T47D (cell line): ENCODE measurements at regions of chr1 and their contacts with region 1.

Region 1: DNA sequence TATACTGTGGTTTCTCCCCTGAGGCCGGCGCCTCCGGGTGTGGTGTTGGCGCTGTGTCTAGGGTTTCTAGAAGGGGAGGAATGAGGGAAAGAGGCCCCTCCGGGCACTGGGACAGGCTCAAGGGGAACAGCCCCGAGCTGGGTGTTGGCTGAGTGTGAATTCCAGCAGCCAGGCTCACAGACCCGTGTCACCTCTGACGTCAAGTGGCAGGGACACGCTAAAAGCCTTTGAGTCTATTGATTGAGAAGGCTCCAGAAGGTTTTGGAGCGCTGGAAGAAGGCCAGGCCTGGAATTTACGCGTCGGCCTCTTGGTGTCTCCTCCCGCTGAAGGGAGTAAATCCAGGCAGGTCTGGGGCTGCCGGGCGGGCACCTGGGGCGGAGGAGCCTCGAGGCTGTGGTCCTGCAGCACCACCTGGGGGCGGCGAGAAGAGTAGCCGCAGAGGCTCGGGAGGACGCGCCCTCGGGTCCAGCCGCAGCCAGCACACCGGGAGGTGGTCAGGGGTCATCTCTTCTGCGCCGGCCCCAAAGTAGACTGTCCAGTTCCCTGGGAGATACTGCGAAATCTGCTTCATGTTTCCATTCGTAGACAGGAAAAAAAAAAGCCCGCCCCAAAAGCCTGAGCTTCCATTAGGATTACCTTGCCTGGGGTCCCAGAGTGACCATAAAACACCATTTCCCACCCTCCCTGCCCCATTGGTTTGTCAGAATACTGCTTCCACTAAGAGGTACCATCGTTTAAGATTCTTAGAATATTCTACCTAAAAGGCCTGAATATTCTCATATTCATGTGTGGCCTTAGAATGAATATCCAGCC is 61.7 kb downstream of the TLR5 start:
- DNase-seq: peak; percentile 76 to 99

Region 2: GRCh38 chr1:222732216-222733159 is 348.9 kb before region 1 on chr1:
- in situ Hi-C with region 1: loop called (anchors 25 kb)
- DNase-seq: no peak